Calu3 (cell line): ENCODE measurements at regions of chr5 and their contacts with region 1.

Region 1: GRCh38 chr5:174045470-174046025 is at the start of gene NSG2:
- DNase-seq: peak; percentile 89
- H3K4me3 Mint-ChIP-seq: no peak within 1 kb of the TSS
- H3K27ac Mint-ChIP-seq: no peak within 1 kb of the TSS
- H3K4me1 Mint-ChIP-seq: no peaks in the 10 kb centered on the region
- H3K27me3 Mint-ChIP-seq: peaks cover 45% of the 10 kb centered on the region
- CTCF ChIP-seq: peak; percentile 84
- total RNA-seq, gene NSG2: not detected in 2 replicates

Region 2: DNA sequence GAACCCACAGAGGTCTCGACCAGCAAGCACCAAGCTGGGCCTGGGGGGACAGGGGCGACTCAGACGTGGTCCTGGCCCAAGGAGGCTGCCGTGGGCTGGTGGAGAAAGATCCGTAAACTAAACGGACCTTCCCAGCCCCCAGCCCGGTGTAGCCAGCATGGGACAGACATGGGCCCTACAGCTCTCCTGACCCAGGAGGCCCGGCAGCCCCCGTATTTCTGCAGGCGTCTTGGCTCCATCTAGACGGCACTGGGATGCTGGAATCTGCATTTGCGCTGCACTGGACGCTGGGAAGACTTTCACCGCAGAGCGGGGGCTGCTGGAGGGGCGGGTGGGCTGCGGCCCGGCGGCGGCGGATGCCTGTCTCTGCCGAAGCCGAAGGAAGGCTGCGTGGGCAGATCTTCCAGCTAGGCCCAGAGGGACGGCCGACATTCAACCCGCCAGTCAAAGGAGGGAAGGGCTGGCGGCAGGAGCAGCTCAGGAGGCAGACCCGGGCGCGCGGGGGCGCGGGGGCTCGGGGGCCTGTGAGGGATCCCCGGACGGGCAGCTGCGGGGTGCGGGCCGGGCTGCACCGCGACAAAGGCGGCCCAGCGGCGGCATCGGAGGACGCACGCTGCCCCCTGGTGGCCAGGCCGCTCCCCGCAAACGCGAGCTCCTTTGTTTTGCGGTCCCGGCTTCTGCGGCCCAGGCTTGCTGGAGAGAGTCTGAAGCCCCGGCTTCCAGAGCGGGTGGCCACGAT is 266.2 kb after region 1 on chr5:
- CTCF ChIA-PET with region 1: interaction called, 61 read pairs
- intact Hi-C with region 1: no loop called
- DNase-seq: peak; percentile 88
- H3K4me3 Mint-ChIP-seq: no peak overlapping the region
- H3K27ac Mint-ChIP-seq: no peak overlapping the region
- H3K4me1 Mint-ChIP-seq: no peaks in the 10 kb centered on the region
- H3K27me3 Mint-ChIP-seq: peaks cover 97% of the 10 kb centered on the region
- CTCF ChIP-seq: peak; percentile 88

Region 3: DNA sequence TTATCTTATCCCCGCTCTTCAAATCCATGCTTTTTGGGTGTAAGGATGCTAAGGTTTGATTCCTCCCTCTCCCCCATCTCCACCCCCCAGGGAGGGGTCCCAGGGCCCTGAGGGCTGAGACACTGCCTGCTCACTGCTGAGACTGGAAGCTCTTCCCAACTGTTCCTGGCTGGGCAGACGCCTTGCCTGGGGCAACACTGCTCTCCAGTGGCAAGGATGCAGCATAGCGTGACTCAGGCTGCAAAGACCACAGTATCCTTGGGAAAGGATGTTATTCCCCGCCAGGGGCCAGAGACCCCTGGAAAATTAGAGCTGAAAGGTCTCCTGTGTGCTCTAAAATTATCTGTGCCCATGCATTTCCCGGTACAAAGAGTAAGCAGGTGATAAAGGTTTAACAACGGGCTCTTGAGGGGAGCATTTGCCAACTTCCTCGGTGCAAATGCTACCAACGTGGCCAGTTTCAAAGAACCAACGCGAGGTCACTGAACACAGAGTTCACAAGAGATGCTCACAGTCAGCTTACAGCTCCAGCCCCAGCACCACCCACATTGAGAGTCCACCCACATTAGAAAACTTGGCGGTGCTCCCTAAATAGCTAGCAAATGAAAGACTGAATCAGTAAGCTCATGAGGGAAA is 271.8 kb after region 1 on chr5:
- CTCF ChIA-PET with region 1: interaction called, 61 read pairs
- intact Hi-C with region 1: loop called (anchors 1 kb)
- DNase-seq: peak; percentile 60
- H3K4me3 Mint-ChIP-seq: no peak overlapping the region
- H3K27ac Mint-ChIP-seq: no peak overlapping the region
- H3K4me1 Mint-ChIP-seq: no peaks in the 10 kb centered on the region
- H3K27me3 Mint-ChIP-seq: peaks cover 100% of the 10 kb centered on the region
- CTCF ChIP-seq: peak; percentile 76

Region 4: GRCh38 chr5:174625591-174626350 is 580.2 kb after region 1 on chr5:
- CTCF ChIA-PET with region 1: no interaction called
- intact Hi-C with region 1: no loop called
- DNase-seq: no peak
- H3K4me3 Mint-ChIP-seq: no peak overlapping the region
- H3K27ac Mint-ChIP-seq: no peak overlapping the region
- H3K4me1 Mint-ChIP-seq: peaks cover 7% of the 10 kb centered on the region
- H3K27me3 Mint-ChIP-seq: no peaks in the 10 kb centered on the region
- CTCF ChIP-seq: no peak

Region 5: DNA sequence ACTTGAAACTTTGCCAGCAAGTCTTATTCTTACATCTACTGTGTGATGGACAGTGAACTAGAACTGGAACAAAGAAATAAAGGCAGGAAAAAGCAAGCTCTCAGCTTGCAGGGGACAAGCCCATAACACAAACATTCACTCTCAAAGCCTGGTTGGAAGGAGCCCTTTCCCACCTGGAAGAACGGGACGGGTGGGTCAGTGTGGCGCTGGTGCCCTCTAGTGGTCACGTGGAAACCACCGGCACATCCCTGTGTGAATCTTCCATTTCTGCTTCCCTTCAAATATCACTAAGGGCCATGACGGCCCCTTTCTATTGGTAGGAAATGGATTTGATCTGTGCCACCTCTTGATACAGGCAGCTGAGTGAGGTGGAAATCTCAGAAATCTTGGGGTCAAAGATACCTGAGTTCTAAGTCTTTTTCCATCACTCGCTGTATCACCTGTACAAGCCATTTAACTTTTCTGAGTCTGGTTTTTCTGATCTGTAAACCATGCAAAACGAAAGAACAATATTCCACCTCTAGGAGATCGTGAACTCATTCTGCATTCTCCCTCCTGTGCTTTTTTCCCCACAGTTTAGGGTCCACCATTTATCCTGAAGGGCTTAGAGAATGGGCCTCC is 890.4 kb after region 1 on chr5:
- CTCF ChIA-PET with region 1: no interaction called
- intact Hi-C with region 1: loop called (anchors 10 kb)
- DNase-seq: peak; percentile 82
- H3K4me3 Mint-ChIP-seq: no peak overlapping the region
- H3K27ac Mint-ChIP-seq: no peak overlapping the region
- H3K4me1 Mint-ChIP-seq: no peaks in the 10 kb centered on the region
- H3K27me3 Mint-ChIP-seq: peaks cover 37% of the 10 kb centered on the region
- CTCF ChIP-seq: peak; percentile 89